MCF 10A (cell line): ENCODE measurements at regions of chr20 and their contacts with region 1.

Region 1: GRCh38 chr20:44217342-44218092 is 6.9 kb upstream of the OSER1 start:
- DNase-seq: peak; percentile 81
- H3K4me3 Mint-ChIP-seq: no peak overlapping the region
- H3K27ac Mint-ChIP-seq: no peak overlapping the region
- H3K4me1 Mint-ChIP-seq: peaks cover 13% of the 10 kb centered on the region
- H3K27me3 Mint-ChIP-seq: no peaks in the 10 kb centered on the region
- CTCF ChIP-seq: peak; percentile 98

Region 2: GRCh38 chr20:44123251-44123650 is 94.3 kb before region 1 on chr20:
- CTCF ChIA-PET with region 1: interaction called, 16 read pairs
- POLR2A ChIA-PET with region 1: no interaction called
- intact Hi-C with region 1: no loop called
- DNase-seq: no peak
- H3K4me3 Mint-ChIP-seq: no peak overlapping the region
- H3K27ac Mint-ChIP-seq: no peak overlapping the region
- H3K4me1 Mint-ChIP-seq: no peaks in the 10 kb centered on the region
- H3K27me3 Mint-ChIP-seq: no peaks in the 10 kb centered on the region
- CTCF ChIP-seq: no peak

Region 3: DNA sequence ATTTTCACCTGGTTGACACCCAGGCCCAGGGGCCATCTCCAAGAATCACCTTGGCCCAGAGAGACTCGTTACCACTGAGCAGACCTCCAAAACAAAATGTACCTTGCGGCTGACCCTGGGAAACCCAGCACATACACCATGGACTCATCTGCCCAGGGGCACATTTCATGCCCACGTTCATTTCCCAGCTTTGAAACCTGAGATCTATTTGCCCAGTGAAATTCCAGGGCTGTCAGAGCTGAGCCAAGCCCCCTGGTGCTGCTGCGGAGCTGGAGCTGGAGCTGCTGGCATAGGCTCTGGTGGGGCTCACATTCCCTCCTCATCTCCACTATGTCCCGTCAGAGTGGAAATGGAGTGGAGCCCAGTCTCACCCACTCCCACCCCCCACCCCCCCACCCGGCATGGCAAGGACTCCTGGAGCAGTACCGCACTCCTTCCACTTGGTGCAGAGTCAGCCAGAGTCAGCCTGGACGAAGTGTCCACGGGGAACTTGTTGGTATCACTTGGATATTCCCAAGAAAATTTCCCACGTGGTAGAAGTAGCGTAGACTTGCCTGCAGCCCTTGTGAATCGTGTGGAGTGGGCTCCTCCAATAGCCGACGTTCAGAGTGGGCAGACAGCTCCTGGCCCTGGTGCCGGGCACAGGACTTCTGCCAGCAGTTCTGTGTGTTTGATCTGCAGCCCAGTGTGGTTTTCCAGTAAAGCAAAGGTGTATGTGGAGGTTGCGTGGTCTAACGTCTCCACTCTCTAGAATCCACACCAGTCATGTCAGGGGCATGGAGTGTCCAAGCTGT is 11.1 kb after region 1 on chr20:
- CTCF ChIA-PET with region 1: interaction called, 25 read pairs
- POLR2A ChIA-PET with region 1: interaction called, 3 read pairs
- intact Hi-C with region 1: no loop called
- DNase-seq: no peak
- H3K4me3 Mint-ChIP-seq: no peak overlapping the region
- H3K27ac Mint-ChIP-seq: no peak overlapping the region
- H3K4me1 Mint-ChIP-seq: no peaks in the 10 kb centered on the region
- H3K27me3 Mint-ChIP-seq: no peaks in the 10 kb centered on the region
- CTCF ChIP-seq: no peak

Region 4: GRCh38 chr20:44302026-44302669 is 84.6 kb after region 1 on chr20:
- CTCF ChIA-PET with region 1: interaction called, 536 read pairs
- POLR2A ChIA-PET with region 1: interaction called, 3 read pairs
- intact Hi-C with region 1: no loop called
- DNase-seq: no peak
- H3K4me3 Mint-ChIP-seq: no peak overlapping the region
- H3K27ac Mint-ChIP-seq: no peak overlapping the region
- H3K4me1 Mint-ChIP-seq: peaks cover 6% of the 10 kb centered on the region
- H3K27me3 Mint-ChIP-seq: no peaks in the 10 kb centered on the region
- CTCF ChIP-seq: no peak

Region 5: GRCh38 chr20:44370639-44371220 is 153.2 kb after region 1 on chr20:
- CTCF ChIA-PET with region 1: interaction called, 22 read pairs
- POLR2A ChIA-PET with region 1: interaction called, 4 read pairs
- intact Hi-C with region 1: no loop called
- DNase-seq: no peak
- H3K4me3 Mint-ChIP-seq: no peak overlapping the region
- H3K27ac Mint-ChIP-seq: no peak overlapping the region
- H3K4me1 Mint-ChIP-seq: no peaks in the 10 kb centered on the region
- H3K27me3 Mint-ChIP-seq: peaks cover 12% of the 10 kb centered on the region
- CTCF ChIP-seq: no peak

Region 6: GRCh38 chr20:44454301-44454963 is 236.9 kb after region 1 on chr20:
- CTCF ChIA-PET with region 1: interaction called, 57 read pairs
- POLR2A ChIA-PET with region 1: no interaction called
- intact Hi-C with region 1: no loop called
- DNase-seq: no peak
- H3K4me3 Mint-ChIP-seq: no peak overlapping the region
- H3K27ac Mint-ChIP-seq: no peak overlapping the region
- H3K4me1 Mint-ChIP-seq: no peaks in the 10 kb centered on the region
- H3K27me3 Mint-ChIP-seq: no peaks in the 10 kb centered on the region
- CTCF ChIP-seq: no peak

Region 7: GRCh38 chr20:44609511-44610312 is 392.2 kb after region 1 on chr20:
- CTCF ChIA-PET with region 1: interaction called, 12 read pairs
- POLR2A ChIA-PET with region 1: no interaction called
- intact Hi-C with region 1: loop called (anchors 10 kb)
- DNase-seq: peak; percentile 92
- H3K4me3 Mint-ChIP-seq: peak overlapping the region; percentile 58
- H3K27ac Mint-ChIP-seq: peak overlapping the region; percentile 76
- H3K4me1 Mint-ChIP-seq: peaks cover 10% of the 10 kb centered on the region
- H3K27me3 Mint-ChIP-seq: no peaks in the 10 kb centered on the region
- CTCF ChIP-seq: peak; percentile 96